ENCODE measurements at regions of chr3 and their contacts with region 1.

Region 1: GRCh38 chr3:192802957-192803899 is 75.9 kb upstream of the FGF12 start:
- DNase-seq: peak; percentile 32
- CTCF ChIP-seq: no peak

Region 2: DNA sequence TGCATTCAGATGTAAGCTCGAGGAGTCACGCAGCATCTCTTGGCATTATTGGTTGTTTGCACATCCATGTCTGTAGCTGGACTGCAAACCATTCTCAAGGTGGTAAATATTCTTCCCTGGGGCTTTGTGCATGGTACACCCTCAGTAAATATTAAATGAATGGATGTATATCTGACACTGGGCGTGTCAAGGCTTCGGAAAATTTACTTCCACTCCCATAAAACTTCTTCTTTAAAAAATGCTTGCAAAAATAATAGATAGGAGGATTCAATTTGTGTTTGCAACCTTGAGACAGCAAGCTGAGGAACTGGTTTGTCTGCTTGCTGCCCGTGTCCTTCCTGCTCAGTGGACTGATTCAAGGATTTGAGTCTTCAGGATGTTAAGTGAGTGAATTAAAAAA is 529.7 kb before region 1 on chr3:
- in situ Hi-C with region 1: no loop called
- DNase-seq: no peak
- CTCF ChIP-seq: no peak

Region 3: GRCh38 chr3:192986379-192986778 is 183.2 kb after region 1 on chr3:
- in situ Hi-C with region 1: no loop called
- DNase-seq: no peak
- CTCF ChIP-seq: no peak

Region 4: GRCh38 chr3:193452338-193452737 is 649.1 kb after region 1 on chr3:
- in situ Hi-C with region 1: loop called (anchors 25 kb)
- DNase-seq: no peak
- CTCF ChIP-seq: no peak